Naive thymus-derived CD4-positive, alpha-beta T cell (primary cell): ENCODE measurements at regions of chr5 and their contacts with region 1.

Region 1: DNA sequence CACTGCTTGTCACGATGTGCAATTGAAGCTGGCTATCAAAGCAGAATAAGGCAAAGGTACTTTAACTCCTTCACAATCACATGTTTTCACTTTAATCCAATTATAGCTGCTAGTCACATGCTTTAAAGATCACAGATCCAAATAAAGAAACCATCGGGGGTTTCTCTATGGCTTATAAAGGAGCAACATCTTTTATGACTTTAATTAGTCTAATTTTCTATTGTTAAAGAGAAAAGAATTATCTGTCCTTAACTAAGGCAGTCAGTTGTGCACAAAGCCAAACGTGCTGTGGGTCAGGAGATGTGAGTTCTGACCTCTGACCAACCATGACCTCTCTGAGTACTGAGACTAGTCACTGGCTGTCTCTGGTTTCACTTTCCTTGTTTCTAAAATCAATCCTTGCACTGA is 561.1 kb downstream of the RAB3C start:
- DNase-seq: no peak
- ATAC-seq: no peak
- H3K4me3 ChIP-seq: no peak overlapping the region
- H3K4me3 Mint-ChIP-seq: no peak overlapping the region
- H3K27ac ChIP-seq: no peak overlapping the region
- H3K27ac Mint-ChIP-seq: no peak overlapping the region
- H3K4me1 ChIP-seq: no peaks in the 10 kb centered on the region
- H3K4me1 Mint-ChIP-seq: peaks cover 0 to 40% (median 0%) of the 10 kb centered on the region in 7 donors
- H3K27me3 ChIP-seq: no peaks in the 10 kb centered on the region
- H3K27me3 Mint-ChIP-seq: peaks cover 0 to 4% (median 0%) of the 10 kb centered on the region in 5 donors

Region 2: GRCh38 chr5:59133682-59134261 is 10.2 kb before region 1 on chr5:
- CTCF ChIA-PET with region 1: interaction called, 4 read pairs
- POLR2A ChIA-PET with region 1: interaction called, 13 read pairs
- intact Hi-C with region 1: loop called in 1 of 2 experiments (anchors 1 kb)
- DNase-seq: no peak
- ATAC-seq: no peak
- H3K4me3 ChIP-seq: no peak overlapping the region
- H3K4me3 Mint-ChIP-seq: no peak overlapping the region
- H3K27ac ChIP-seq: no peak overlapping the region
- H3K27ac Mint-ChIP-seq: peak overlapping the region in 2 of 9 donors; percentile 5 to 54
- H3K4me1 ChIP-seq: peaks cover 3 to 5% of the 10 kb centered on the region in 2 donors
- H3K4me1 Mint-ChIP-seq: peaks cover 0 to 45% (median 23%) of the 10 kb centered on the region in 7 donors
- H3K27me3 ChIP-seq: no peaks in the 10 kb centered on the region
- H3K27me3 Mint-ChIP-seq: no peaks in the 10 kb centered on the region

Region 3: GRCh38 chr5:59264639-59265240 is 120.8 kb after region 1 on chr5:
- CTCF ChIA-PET with region 1: no interaction called
- POLR2A ChIA-PET with region 1: no interaction called
- intact Hi-C with region 1: no loop called
- DNase-seq: no peak
- ATAC-seq: no peak
- H3K4me3 ChIP-seq: no peak overlapping the region
- H3K4me3 Mint-ChIP-seq: no peak overlapping the region
- H3K27ac ChIP-seq: no peak overlapping the region
- H3K27ac Mint-ChIP-seq: no peak overlapping the region
- H3K4me1 ChIP-seq: no peaks in the 10 kb centered on the region
- H3K4me1 Mint-ChIP-seq: no peaks in the 10 kb centered on the region
- H3K27me3 ChIP-seq: no peaks in the 10 kb centered on the region
- H3K27me3 Mint-ChIP-seq: peaks cover 0 to 27% (median 5%) of the 10 kb centered on the region in 5 donors